ENCODE measurements at regions of chr12 and their contacts with region 1.

Region 1: GRCh38 chr12:102896067-102896466 is 21.0 kb downstream of the PAH start:
- DNase-seq: no peak
- ATAC-seq: no peak
- H3K4me3 Mint-ChIP-seq: no peak overlapping the region
- H3K27ac Mint-ChIP-seq: no peak overlapping the region
- H3K4me1 Mint-ChIP-seq: no peaks in the 10 kb centered on the region
- H3K27me3 Mint-ChIP-seq: no peaks in the 10 kb centered on the region

Region 2: GRCh38 chr12:102927220-102927619 is 31.2 kb after region 1 on chr12:
- CTCF ChIA-PET with region 1: no interaction called
- POLR2A ChIA-PET with region 1: no interaction called
- intact Hi-C with region 1: loop called in 1 of 2 experiments (anchors 1 kb)
- DNase-seq: no peak
- ATAC-seq: no peak
- H3K4me3 Mint-ChIP-seq: no peak overlapping the region
- H3K27ac Mint-ChIP-seq: no peak overlapping the region
- H3K4me1 Mint-ChIP-seq: no peaks in the 10 kb centered on the region
- H3K27me3 Mint-ChIP-seq: peaks cover 18% of the 10 kb centered on the region

Region 3: GRCh38 chr12:102980350-102980749 is 84.3 kb after region 1 on chr12:
- CTCF ChIA-PET with region 1: no interaction called
- POLR2A ChIA-PET with region 1: no interaction called
- intact Hi-C with region 1: no loop called
- DNase-seq: no peak
- ATAC-seq: no peak
- H3K4me3 Mint-ChIP-seq: no peak overlapping the region
- H3K27ac Mint-ChIP-seq: no peak overlapping the region
- H3K4me1 Mint-ChIP-seq: no peaks in the 10 kb centered on the region
- H3K27me3 Mint-ChIP-seq: peaks cover 20% of the 10 kb centered on the region

Measured in activated CD4-positive, alpha-beta T cell treated with anti-CD3 and anti-CD28 coated beads for 36 hours (primary cell).